HepG2 (cell line): ENCODE measurements at regions of chr2 and their contacts with region 1.

Region 1: GRCh38 chr2:155223781-155224406 is 525.4 kb downstream of the KCNJ3 start:
- DNase-seq: peak; percentile 15
- ATAC-seq: peak; percentile 60
- H3K4me3 ChIP-seq: no peak overlapping the region
- H3K27ac ChIP-seq: no peak overlapping the region
- H3K4me1 ChIP-seq: no peaks in the 10 kb centered on the region
- H3K27me3 ChIP-seq: no peaks in the 10 kb centered on the region
- CTCF ChIP-seq: peak; percentile 51
- EP300 ChIP-seq: no peak
- POLR2A ChIP-seq: no peak
- RAD21 ChIP-seq: no peak

Region 2: DNA sequence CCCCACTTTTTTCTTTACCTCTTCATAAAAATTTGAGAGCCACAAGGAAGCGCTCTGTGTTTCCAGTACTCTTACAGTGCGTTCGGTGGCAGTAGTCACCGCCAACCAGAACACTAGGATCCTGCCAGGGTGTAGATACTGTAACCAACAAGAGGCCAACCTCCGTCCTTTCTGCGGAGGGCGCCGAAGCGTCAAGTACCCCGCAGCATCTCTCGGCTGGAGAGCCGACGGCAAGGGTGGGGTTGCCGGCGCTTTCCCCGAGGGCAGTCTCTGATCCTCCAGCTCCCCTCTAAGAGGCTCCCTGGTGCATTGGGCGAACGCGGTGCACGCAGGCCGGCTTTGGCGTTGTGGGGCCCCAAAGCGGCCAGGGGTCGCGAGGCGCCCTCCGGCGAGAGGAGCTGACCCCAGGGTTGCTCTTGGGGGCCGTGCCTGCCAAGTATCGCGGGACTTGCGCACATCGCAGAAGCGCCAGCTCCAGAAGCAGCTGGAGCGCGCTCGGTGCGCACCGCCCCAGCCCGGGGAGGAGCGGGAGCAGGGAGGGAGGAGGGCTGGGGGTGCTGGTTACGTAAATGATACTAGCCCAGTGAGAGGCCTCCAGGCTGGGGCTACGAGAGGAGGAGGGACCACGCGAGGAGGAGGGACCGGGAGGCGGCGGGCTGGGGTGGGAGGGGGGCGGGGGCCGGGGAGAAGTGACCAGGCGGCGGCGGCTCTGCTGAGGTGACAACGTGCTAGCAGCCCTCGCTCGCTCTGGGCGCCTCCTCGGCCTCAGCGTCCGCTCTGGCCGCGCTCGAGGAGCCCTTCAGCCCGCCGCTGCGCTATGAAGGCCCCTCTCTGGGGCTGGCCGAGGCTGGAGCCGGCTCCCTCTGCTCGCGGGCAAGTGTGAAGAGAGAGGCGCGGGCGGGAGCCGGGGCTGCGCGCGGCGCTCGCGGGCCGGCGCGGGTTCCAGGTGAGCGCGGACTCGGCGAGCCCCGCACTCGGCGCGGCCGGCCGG is 1352.4 kb before region 1 on chr2 and contains the start of gene GALNT13:
- CTCF ChIA-PET with region 1: no interaction called
- POLR2A ChIA-PET with region 1: no interaction called
- in situ Hi-C with region 1: no loop called
- intact Hi-C with region 1: loop called (anchors 5 kb)
- DNase-seq: peak; percentile 57
- ATAC-seq: peak; percentile 82
- H3K4me3 ChIP-seq: peak within 1 kb of the TSS in 2 of 3 experiments; percentile 40 to 51; a peak in 4 of 6 replicates
- H3K27ac ChIP-seq: no peak within 1 kb of the TSS
- H3K4me1 ChIP-seq: no peaks in the 10 kb centered on the region
- H3K27me3 ChIP-seq: peaks cover 2 to 24% of the 10 kb centered on the region in 2 experiments; a peak in 2 of 5 replicates
- CTCF ChIP-seq: 0 out of 2 replicates have a peak, but pooled peaks have one; percentile 6
- EP300 ChIP-seq: no peak
- POLR2A ChIP-seq: no peak
- RAD21 ChIP-seq: no peak
- total RNA-seq, gene GALNT13: 4.8 and 5.0 TPM in 2 replicates

Region 3: GRCh38 chr2:154402218-154402617 is 821.7 kb before region 1 on chr2:
- CTCF ChIA-PET with region 1: interaction called, 7 read pairs
- POLR2A ChIA-PET with region 1: no interaction called
- in situ Hi-C with region 1: no loop called
- intact Hi-C with region 1: loop called (anchors 1 kb)
- DNase-seq: peak; percentile 53
- ATAC-seq: peak; percentile 84
- H3K4me3 ChIP-seq: no peak overlapping the region
- H3K27ac ChIP-seq: no peak overlapping the region
- H3K4me1 ChIP-seq: peaks cover 11% of the 10 kb centered on the region
- H3K27me3 ChIP-seq: no peaks in the 10 kb centered on the region
- CTCF ChIP-seq: peak; percentile 65
- EP300 ChIP-seq: no peak
- POLR2A ChIP-seq: no peak
- RAD21 ChIP-seq: peak; percentile 51; the same call in 1 of the 2 replicates

Region 4: DNA sequence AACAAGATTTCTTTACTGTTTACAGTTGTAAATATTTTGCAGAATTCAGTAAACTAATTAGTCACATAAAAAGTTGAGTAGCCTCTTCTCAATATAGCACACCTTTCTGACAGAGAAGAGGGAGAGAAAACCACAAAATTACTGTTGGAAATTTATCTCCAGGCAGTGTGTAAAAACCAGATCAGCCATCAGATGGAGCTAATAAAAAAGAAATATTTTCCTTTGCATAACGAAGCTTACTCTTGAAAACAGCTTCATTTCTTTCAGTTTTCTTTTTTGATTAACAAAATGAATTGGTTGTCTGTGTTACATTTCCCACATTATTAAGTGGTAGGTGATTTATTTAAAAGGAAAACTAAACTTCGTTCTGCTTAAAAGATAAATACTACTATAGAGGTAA is 784.7 kb before region 1 on chr2:
- CTCF ChIA-PET with region 1: interaction called, 5 read pairs
- POLR2A ChIA-PET with region 1: no interaction called
- in situ Hi-C with region 1: loop called (anchors 25 kb)
- intact Hi-C with region 1: loop called (anchors 1 kb)
- DNase-seq: peak; percentile 13
- ATAC-seq: peak; percentile 78
- H3K4me3 ChIP-seq: no peak overlapping the region
- H3K27ac ChIP-seq: no peak overlapping the region
- H3K4me1 ChIP-seq: 0 out of 2 replicates have a peak, but pooled peaks cover 6% of the 10 kb centered on the region
- H3K27me3 ChIP-seq: no peaks in the 10 kb centered on the region
- CTCF ChIP-seq: peak; percentile 68
- EP300 ChIP-seq: no peak
- POLR2A ChIP-seq: no peak
- RAD21 ChIP-seq: peak; percentile 59; the same call in 1 of the 2 replicates

Region 5: GRCh38 chr2:154623819-154624218 is 600.1 kb before region 1 on chr2:
- CTCF ChIA-PET with region 1: interaction called, 18 read pairs
- POLR2A ChIA-PET with region 1: no interaction called
- in situ Hi-C with region 1: loop called (anchors 5 kb)
- intact Hi-C with region 1: loop called (anchors 1 kb)
- DNase-seq: peak; percentile 42
- ATAC-seq: peak; percentile 90
- H3K4me3 ChIP-seq: no peak overlapping the region
- H3K27ac ChIP-seq: no peak overlapping the region
- H3K4me1 ChIP-seq: no peaks in the 10 kb centered on the region
- H3K27me3 ChIP-seq: no peaks in the 10 kb centered on the region
- CTCF ChIP-seq: peak; percentile 76
- EP300 ChIP-seq: no peak
- POLR2A ChIP-seq: no peak
- RAD21 ChIP-seq: 0 out of 2 replicates have a peak, but pooled peaks have one; percentile 41

Region 6: DNA sequence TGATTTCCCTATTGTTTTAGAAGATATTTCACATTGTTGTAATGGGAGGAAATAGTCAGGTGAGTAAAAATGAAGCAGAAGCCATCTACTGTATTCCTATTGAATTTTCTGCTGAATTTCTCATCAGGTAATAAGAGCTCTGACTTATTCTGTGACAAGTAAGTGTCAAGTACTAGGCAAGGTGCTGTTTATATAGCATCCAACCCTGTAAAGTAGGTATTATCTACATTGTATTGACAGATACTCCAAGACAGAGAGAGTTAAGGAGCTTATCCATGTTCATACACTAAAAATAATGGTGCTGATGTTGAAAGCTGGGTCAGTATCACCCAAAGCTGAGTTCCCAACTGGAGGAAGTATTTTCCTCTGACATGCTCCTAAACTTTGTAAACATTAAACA is 419.4 kb before region 1 on chr2:
- CTCF ChIA-PET with region 1: no interaction called
- POLR2A ChIA-PET with region 1: no interaction called
- in situ Hi-C with region 1: no loop called
- intact Hi-C with region 1: loop called (anchors 10 kb)
- DNase-seq: no peak
- ATAC-seq: no peak
- H3K4me3 ChIP-seq: no peak overlapping the region
- H3K27ac ChIP-seq: no peak overlapping the region
- H3K4me1 ChIP-seq: no peaks in the 10 kb centered on the region
- H3K27me3 ChIP-seq: no peaks in the 10 kb centered on the region
- CTCF ChIP-seq: no peak
- EP300 ChIP-seq: no peak
- POLR2A ChIP-seq: no peak
- RAD21 ChIP-seq: no peak

Region 7: GRCh38 chr2:155169317-155169716 is 54.6 kb before region 1 on chr2:
- CTCF ChIA-PET with region 1: no interaction called
- POLR2A ChIA-PET with region 1: no interaction called
- in situ Hi-C with region 1: no loop called
- intact Hi-C with region 1: no loop called
- DNase-seq: no peak
- ATAC-seq: no peak
- H3K4me3 ChIP-seq: no peak overlapping the region
- H3K27ac ChIP-seq: no peak overlapping the region
- H3K4me1 ChIP-seq: no peaks in the 10 kb centered on the region
- H3K27me3 ChIP-seq: no peaks in the 10 kb centered on the region
- CTCF ChIP-seq: no peak
- EP300 ChIP-seq: no peak
- POLR2A ChIP-seq: no peak
- RAD21 ChIP-seq: no peak

Region 8: GRCh38 chr2:155266583-155266982 is 42.7 kb after region 1 on chr2:
- CTCF ChIA-PET with region 1: no interaction called
- POLR2A ChIA-PET with region 1: no interaction called
- in situ Hi-C with region 1: no loop called
- intact Hi-C with region 1: no loop called
- DNase-seq: no peak
- ATAC-seq: peak; percentile 82
- H3K4me3 ChIP-seq: no peak overlapping the region
- H3K27ac ChIP-seq: no peak overlapping the region
- H3K4me1 ChIP-seq: no peaks in the 10 kb centered on the region
- H3K27me3 ChIP-seq: no peaks in the 10 kb centered on the region
- CTCF ChIP-seq: peak; percentile 59
- EP300 ChIP-seq: no peak
- POLR2A ChIP-seq: no peak
- RAD21 ChIP-seq: no peak

Region 9: GRCh38 chr2:155318710-155319109 is 94.8 kb after region 1 on chr2:
- CTCF ChIA-PET with region 1: no interaction called
- POLR2A ChIA-PET with region 1: no interaction called
- in situ Hi-C with region 1: no loop called
- intact Hi-C with region 1: no loop called
- DNase-seq: no peak
- ATAC-seq: no peak
- H3K4me3 ChIP-seq: no peak overlapping the region
- H3K27ac ChIP-seq: no peak overlapping the region
- H3K4me1 ChIP-seq: no peaks in the 10 kb centered on the region
- H3K27me3 ChIP-seq: no peaks in the 10 kb centered on the region
- CTCF ChIP-seq: no peak
- EP300 ChIP-seq: no peak
- POLR2A ChIP-seq: no peak
- RAD21 ChIP-seq: no peak